A673 (cell line): ENCODE measurements at regions of chr3 and their contacts with region 1.

Region 1: GRCh38 chr3:4322635-4323034 is 19.5 kb downstream of the SETMAR start:
- DNase-seq: peak; percentile 50
- H3K4me3 ChIP-seq: no peak overlapping the region
- H3K27ac ChIP-seq: no peak overlapping the region
- H3K4me1 ChIP-seq: peaks cover 12% of the 10 kb centered on the region
- H3K27me3 ChIP-seq: no peaks in the 10 kb centered on the region
- CTCF ChIP-seq: no peak

Region 2: DNA sequence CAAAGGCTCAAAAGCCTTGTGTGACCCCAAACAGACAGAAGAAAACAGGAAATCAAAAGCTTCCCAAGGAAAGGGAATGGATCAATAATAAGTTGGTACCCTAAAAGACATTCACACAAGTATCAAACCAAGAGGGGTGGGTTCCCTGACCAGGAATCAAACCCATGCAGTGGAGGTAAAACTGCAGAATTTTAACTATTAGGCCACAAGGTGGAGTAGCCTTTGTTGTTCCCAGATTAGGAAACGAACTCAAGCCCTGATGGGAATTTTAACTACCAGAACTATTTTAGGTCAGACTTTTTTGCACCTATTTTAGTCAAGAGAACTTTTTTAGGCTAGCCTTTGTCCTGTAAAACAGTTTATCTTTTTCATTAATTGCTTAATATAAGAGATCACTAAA is 11.9 kb after region 1 on chr3:
- CTCF ChIA-PET with region 1: interaction called, 10 read pairs
- POLR2A ChIA-PET with region 1: no interaction called
- intact Hi-C with region 1: no loop called
- DNase-seq: no peak
- H3K4me3 ChIP-seq: no peak overlapping the region
- H3K27ac ChIP-seq: no peak overlapping the region
- H3K4me1 ChIP-seq: no peaks in the 10 kb centered on the region
- H3K27me3 ChIP-seq: no peaks in the 10 kb centered on the region
- CTCF ChIP-seq: peak; percentile 24; the same call in 1 of the 2 replicates